Heart left ventricle (tissue), 16 donors: ENCODE measurements at regions of chr7 and their contacts with region 1.

Region 1: GRCh38 chr7:104943502-104944343 is 70.3 kb upstream of the KMT2E start:
- DNase-seq: peak in 4 of 5 donors; percentile 77 to 91 (median 83)
- ATAC-seq: peak; percentile 26 to 65 (median 52)
- H3K4me3 ChIP-seq: peak overlapping the region in 3 of 12 donors; percentile 0 to 32 (median 6)
- H3K27ac ChIP-seq: peak overlapping the region; percentile 79 to 99 (median 92)
- H3K4me1 ChIP-seq: peaks cover 3 to 55% (median 30%) of the 10 kb centered on the region in 12 donors
- H3K27me3 ChIP-seq: no peaks in the 10 kb centered on the region
- CTCF ChIP-seq: no peak
- POLR2A ChIP-seq: no peak

Region 2: DNA sequence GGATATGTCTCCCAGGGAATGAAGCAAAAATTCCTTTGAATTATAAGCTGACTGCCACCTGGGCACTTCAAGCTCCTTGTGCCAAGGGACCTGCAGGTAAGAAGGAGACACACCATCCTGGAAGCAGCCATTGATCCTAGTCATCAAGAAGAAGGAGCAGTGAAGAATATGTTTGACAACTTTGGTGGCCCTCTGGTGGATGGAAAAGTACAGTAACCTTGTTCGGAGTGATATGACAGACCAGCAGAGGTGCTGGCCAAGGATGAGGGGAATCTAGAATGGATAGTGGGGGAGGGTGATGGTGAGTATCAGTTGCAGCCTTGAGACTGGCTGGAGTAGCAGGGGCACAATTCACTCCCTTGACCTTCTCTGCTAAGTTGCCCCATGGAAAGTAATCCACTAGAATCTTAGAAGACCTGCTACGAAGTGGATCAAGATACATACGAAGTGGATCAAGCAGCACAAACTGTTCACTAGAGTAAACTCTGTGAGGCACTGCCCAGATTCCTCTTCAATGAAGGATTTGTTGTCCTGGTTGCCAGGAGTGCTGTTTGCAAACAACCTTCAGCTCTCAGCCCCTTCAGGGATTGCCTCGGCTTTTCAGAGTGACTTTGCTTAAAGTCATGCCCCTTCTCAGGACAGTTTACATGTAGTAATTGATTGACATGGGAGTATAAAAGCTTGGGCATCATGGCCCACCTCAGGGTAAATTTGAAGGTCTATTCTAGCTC is 691.2 kb before region 1 on chr7:
- intact Hi-C with region 1: no loop called
- DNase-seq: no peak
- ATAC-seq: peak in 3 of 4 donors; percentile 29 to 62 (median 41)
- H3K4me3 ChIP-seq: no peak overlapping the region
- H3K27ac ChIP-seq: no peak overlapping the region
- H3K4me1 ChIP-seq: peaks cover 0 to 3% (median 0%) of the 10 kb centered on the region in 12 donors
- H3K27me3 ChIP-seq: no peaks in the 10 kb centered on the region
- CTCF ChIP-seq: peak in 3 of 12 donors; percentile 6 to 17 (median 6)
- POLR2A ChIP-seq: no peak

Region 3: DNA sequence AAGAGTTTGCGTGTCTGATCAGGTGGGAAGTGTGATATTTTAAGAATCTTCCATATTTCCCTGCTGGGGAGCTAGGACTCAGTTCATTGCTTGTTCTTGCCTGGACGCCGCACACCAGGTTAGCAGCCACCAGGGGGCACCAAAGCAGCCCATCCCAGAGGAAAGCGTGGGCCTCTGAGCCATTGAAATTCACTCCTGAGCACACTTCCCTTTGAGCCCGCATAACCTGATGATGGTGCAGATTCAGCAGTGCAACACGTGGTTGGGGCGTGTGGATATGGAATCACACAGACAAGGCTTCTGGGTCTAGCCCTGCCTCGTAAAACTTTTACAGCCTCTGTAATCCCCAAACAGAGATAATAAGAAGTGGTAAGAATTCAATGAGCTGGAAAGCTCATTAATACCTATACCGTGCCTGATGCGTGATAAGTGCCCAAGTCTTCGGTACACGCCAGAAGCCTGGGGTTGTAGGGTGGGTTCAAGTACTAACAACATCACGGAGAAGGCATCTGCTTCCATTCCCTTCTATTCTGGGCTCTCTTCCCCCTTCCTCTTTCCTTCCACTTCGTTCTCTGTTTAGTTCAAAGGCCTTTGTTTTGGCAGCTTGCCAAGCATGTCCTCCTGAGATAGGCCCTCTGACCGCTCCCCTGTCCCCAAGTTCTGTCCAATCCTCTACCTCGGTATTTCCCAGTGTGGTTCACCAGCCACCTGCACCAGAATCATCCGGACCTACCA is 59.8 kb before region 1 on chr7:
- intact Hi-C with region 1: loop called in 1 of 10 experiments (anchors 5 kb)
- DNase-seq: peak; percentile 85 to 93 (median 89)
- ATAC-seq: peak; percentile 94 to 97 (median 96)
- H3K4me3 ChIP-seq: peak overlapping the region in 6 of 12 donors; percentile 2 to 33 (median 23)
- H3K27ac ChIP-seq: peak overlapping the region; percentile 71 to 90 (median 84)
- H3K4me1 ChIP-seq: peaks cover 0 to 19% (median 13%) of the 10 kb centered on the region in 12 donors
- H3K27me3 ChIP-seq: no peaks in the 10 kb centered on the region
- CTCF ChIP-seq: peak; percentile 90 to 96 (median 94)
- POLR2A ChIP-seq: no peak

Region 4: DNA sequence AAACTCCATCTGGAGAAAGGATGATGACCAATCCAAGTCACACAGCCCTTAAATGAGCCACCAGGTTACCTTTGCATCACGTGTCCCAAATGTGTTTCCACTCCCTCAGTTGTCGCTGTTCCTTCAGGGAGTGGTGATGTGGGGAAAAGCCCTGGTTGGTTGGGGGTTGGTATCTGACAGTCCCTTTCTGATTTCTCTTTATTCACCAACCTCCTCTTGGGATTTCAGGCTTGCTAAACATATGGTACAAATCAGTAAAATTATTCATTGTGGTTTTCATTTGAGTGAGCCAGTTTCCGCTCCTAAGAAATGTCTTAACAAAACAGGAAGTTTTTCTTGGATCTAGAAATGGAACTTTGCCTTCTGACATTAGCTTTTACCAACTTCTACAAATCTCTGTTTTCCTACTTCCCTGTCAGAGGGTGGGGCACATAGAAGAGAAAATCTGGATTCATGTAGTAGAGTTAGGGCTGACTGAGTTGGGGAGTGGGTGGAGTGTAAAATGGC is 30.2 kb after region 1 on chr7:
- intact Hi-C with region 1: loop called in 2 of 10 experiments (anchors 2 kb)
- DNase-seq: peak in 2 of 5 donors; percentile 25 to 39
- ATAC-seq: peak; percentile 33 to 80 (median 76)
- H3K4me3 ChIP-seq: no peak overlapping the region
- H3K27ac ChIP-seq: peak overlapping the region; percentile 21 to 94 (median 82)
- H3K4me1 ChIP-seq: peaks cover 2 to 74% (median 53%) of the 10 kb centered on the region in 12 donors
- H3K27me3 ChIP-seq: no peaks in the 10 kb centered on the region
- CTCF ChIP-seq: no peak
- POLR2A ChIP-seq: no peak

Region 5: GRCh38 chr7:105013221-105013815 is 69.6 kb after region 1 on chr7:
- intact Hi-C with region 1: loop called in 3 of 10 experiments (anchors 1 to 5 kb)
- DNase-seq: peak; percentile 95 to 98 (median 97)
- ATAC-seq: peak; percentile 82 to 88 (median 85)
- H3K4me3 ChIP-seq: peak overlapping the region; percentile 72 to 92 (median 82)
- H3K27ac ChIP-seq: peak overlapping the region; percentile 98 to 100 (median 100)
- H3K4me1 ChIP-seq: peaks cover 0 to 50% (median 33%) of the 10 kb centered on the region in 12 donors
- H3K27me3 ChIP-seq: no peaks in the 10 kb centered on the region
- CTCF ChIP-seq: peak; percentile 30 to 63 (median 50)
- POLR2A ChIP-seq: peak; percentile 68 to 74